Cardiac septum (tissue), 1 donor: ENCODE measurements at regions of chrX and their contacts with region 1.

Region 1: DNA sequence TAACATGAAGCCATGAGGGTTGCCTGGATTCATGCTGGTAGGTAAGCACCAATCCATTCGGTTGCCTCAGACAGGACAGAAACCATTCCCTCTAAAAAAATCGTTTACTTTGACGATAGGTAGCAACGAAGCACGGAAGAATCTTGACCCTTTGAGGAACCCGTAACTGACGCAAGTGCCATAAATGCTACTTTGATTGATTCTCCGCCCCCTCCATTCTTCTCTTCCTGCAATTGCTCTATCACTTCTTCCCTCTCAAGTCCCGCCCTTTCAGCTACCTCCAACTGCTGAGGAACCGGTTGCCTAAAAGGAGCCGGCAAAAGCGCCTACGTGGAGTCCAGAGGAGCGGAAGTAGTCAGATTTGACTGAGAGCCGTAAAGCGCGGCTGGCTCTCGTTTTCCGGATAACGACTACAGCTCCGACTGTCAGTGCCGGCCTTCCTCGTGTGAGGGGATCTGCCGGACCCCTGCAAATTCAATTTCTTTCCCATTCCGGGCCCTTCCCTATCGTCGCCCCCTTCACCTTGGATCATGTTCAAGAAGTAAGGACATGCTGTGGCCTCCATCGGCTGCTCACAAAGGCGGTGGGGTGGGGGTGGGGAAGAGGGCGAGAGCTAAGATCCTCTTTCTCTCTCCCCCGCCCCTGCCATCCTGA is at the start of gene MCTS1:
- DNase-seq: peak; percentile 90
- total RNA-seq, gene MCTS1: 26.7 TPM

Region 2: GRCh38 chrX:120561634-120562568 is 41.9 kb before region 1 on chrX:
- intact Hi-C with region 1: loop called (anchors 1 kb)
- DNase-seq: no peak

Region 3: GRCh38 chrX:120647127-120647526 is 43.3 kb after region 1 on chrX:
- intact Hi-C with region 1: no loop called
- DNase-seq: no peak